Activated CD4-positive, alpha-beta T cell treated with anti-CD3 and anti-CD28 coated beads for 36 hours (primary cell): ENCODE measurements at regions of chr6 and their contacts with region 1.

Region 1: DNA sequence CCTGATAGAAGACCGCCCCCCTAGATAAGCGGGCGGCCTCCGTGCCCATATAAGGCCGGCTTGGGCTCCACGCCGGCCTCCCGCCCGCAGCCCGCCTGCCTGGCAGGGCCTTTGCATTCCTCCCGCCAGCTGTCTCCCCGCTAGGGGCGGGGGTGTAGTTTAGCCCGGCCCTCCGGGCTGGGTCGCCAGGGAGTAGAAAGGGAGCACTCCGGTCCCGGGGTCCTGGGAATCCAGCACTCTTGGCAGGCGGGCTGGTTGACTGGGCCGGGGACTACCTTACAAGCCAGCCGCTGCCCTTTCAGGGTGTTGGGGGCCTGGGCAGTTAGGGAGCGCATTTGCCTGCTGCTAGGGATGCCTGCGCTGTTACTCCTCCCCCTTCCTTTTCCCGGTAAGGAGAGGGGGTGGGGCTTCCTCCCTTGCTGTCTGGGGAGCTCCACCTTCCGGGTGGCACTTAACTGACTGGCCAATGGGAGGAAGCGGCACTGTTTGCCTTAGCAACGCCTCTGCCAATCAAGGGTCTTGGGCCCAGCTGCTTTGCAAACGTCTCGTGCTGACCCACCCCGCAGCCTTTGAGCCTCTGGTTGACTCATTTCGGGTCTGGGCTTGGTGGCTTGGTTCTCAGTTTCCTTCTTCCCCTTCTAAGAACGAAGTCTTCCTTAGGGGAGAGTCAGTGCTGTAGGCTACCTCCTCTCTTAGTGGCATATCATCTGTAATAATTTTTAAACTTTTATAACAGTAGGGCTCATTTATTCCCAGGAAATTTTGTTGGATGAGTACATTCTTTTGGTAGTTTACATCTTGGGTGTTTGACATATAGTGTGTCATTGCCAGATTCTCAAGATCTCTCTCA is 3.4 kb downstream of the SRF start:
- DNase-seq: peak; percentile 98
- ATAC-seq: peak; percentile 80
- H3K4me3 Mint-ChIP-seq: peak overlapping the region; percentile 85
- H3K27ac Mint-ChIP-seq: peak overlapping the region; percentile 79
- H3K4me1 Mint-ChIP-seq: peaks cover 38% of the 10 kb centered on the region
- H3K27me3 Mint-ChIP-seq: no peaks in the 10 kb centered on the region

Region 2: GRCh38 chr6:42771741-42772100 is 402.8 kb before region 1 on chr6:
- CTCF ChIA-PET with region 1: no interaction called
- POLR2A ChIA-PET with region 1: no interaction called
- intact Hi-C with region 1: loop called (anchors 2 to 10 kb)
- DNase-seq: no peak
- ATAC-seq: no peak
- H3K4me3 Mint-ChIP-seq: peak overlapping the region; percentile 70
- H3K27ac Mint-ChIP-seq: peak overlapping the region; percentile 99
- H3K4me1 Mint-ChIP-seq: peaks cover 58% of the 10 kb centered on the region
- H3K27me3 Mint-ChIP-seq: no peaks in the 10 kb centered on the region

Region 3: DNA sequence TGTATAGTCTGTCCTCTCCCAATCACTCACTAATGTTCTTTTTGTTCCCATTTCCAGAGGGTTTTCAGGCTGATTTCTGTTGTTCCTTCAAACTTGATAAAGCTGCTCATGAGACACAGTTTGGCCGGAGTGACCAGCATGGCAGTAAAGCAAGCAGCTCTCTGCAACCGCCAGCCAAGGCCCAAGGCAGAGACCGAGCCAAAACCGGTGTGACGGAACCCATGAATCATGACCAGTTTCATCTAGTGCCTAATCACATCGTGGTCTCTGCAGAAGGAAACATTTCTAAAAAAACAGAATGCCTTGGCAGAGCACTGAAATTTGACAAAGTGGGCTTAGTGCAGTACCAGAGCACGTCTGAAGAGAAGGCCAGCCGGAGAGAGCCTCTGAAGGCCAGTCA is 309.9 kb before region 1 on chr6:
- CTCF ChIA-PET with region 1: no interaction called
- POLR2A ChIA-PET with region 1: no interaction called
- intact Hi-C with region 1: no loop called
- DNase-seq: peak; percentile 26
- ATAC-seq: no peak
- H3K4me3 Mint-ChIP-seq: no peak overlapping the region
- H3K27ac Mint-ChIP-seq: peak overlapping the region; percentile 66
- H3K4me1 Mint-ChIP-seq: no peaks in the 10 kb centered on the region
- H3K27me3 Mint-ChIP-seq: no peaks in the 10 kb centered on the region

Region 4: DNA sequence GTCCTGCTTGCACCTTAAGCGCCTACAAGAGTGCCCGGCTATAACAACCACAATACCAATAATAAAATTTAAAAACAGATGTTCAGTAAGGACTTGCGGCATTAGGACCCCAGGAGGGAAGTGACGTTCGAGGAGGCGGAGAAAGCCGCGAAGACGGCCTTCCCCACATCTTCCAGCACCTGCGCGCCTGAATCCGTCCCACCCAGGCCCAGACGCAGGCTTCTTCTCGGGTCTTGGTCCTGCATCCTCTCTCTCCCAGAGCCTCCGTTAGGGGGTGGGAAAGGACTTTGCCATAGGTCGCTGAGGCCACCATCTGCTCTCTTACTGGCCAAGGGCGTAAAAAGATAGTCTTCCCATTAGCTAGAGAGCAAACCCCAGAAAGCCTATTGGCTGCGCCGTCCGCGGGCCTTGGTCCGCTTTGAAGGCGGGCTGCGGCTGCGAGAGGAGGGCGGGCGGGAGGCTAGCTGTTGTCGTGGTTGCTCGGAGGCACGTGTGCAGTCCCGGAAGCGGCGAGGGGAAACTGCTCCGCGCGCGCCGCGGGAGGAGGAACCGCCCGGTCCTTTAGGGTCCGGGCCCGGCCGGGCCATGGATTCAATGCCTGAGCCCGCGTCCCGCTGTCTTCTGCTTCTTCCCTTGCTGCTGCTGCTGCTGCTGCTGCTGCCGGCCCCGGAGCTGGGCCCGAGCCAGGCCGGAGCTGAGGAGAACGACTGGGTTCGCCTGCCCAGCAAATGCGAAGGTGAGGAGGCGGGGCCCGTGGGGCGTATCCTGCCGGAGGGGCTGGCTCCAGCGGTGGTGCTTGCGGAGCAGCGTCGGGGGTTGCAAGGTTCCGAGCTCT is 245.3 kb before region 1 on chr6 and contains the start of gene CNPY3:
- CTCF ChIA-PET with region 1: interaction called, 4 read pairs
- POLR2A ChIA-PET with region 1: interaction called, 7 read pairs
- intact Hi-C with region 1: loop called (anchors 1 to 5 kb)
- DNase-seq: peak; percentile 98
- ATAC-seq: peak; percentile 88
- H3K4me3 Mint-ChIP-seq: peak within 1 kb of the TSS; percentile 84
- H3K27ac Mint-ChIP-seq: peak within 1 kb of the TSS; percentile 93
- H3K4me1 Mint-ChIP-seq: peaks cover 40% of the 10 kb centered on the region
- H3K27me3 Mint-ChIP-seq: no peaks in the 10 kb centered on the region
- total RNA-seq, gene CNPY3: 33.0 to 34.3 TPM

Region 5: GRCh38 chr6:43013843-43014433 is 160.6 kb before region 1 on chr6 and contains the starts of genes KLHDC3 and MEA1:
- CTCF ChIA-PET with region 1: interaction called, 3 read pairs
- POLR2A ChIA-PET with region 1: no interaction called
- intact Hi-C with region 1: loop called (anchors 1 kb)
- DNase-seq: peak; percentile 99
- ATAC-seq: peak; percentile 96
- H3K4me3 Mint-ChIP-seq: peak within 1 kb of the TSS; percentile 91
- H3K27ac Mint-ChIP-seq: peak within 1 kb of the TSS; percentile 87
- H3K4me1 Mint-ChIP-seq: peaks cover 39% of the 10 kb centered on the region
- H3K27me3 Mint-ChIP-seq: no peaks in the 10 kb centered on the region
- total RNA-seq, gene KLHDC3: 58.3 to 65.2 TPM
- total RNA-seq, gene MEA1: 93.4 to 129 TPM

Region 6: GRCh38 chr6:43247113-43247999 is 72.9 kb after region 1 on chr6:
- CTCF ChIA-PET with region 1: no interaction called
- POLR2A ChIA-PET with region 1: no interaction called
- intact Hi-C with region 1: loop called (anchors 1 to 5 kb)
- DNase-seq: peak; percentile 94
- ATAC-seq: peak; percentile 99
- H3K4me3 Mint-ChIP-seq: peak overlapping the region; percentile 68
- H3K27ac Mint-ChIP-seq: peak overlapping the region; percentile 62
- H3K4me1 Mint-ChIP-seq: peaks cover 25% of the 10 kb centered on the region
- H3K27me3 Mint-ChIP-seq: peaks cover 14% of the 10 kb centered on the region

Region 7: DNA sequence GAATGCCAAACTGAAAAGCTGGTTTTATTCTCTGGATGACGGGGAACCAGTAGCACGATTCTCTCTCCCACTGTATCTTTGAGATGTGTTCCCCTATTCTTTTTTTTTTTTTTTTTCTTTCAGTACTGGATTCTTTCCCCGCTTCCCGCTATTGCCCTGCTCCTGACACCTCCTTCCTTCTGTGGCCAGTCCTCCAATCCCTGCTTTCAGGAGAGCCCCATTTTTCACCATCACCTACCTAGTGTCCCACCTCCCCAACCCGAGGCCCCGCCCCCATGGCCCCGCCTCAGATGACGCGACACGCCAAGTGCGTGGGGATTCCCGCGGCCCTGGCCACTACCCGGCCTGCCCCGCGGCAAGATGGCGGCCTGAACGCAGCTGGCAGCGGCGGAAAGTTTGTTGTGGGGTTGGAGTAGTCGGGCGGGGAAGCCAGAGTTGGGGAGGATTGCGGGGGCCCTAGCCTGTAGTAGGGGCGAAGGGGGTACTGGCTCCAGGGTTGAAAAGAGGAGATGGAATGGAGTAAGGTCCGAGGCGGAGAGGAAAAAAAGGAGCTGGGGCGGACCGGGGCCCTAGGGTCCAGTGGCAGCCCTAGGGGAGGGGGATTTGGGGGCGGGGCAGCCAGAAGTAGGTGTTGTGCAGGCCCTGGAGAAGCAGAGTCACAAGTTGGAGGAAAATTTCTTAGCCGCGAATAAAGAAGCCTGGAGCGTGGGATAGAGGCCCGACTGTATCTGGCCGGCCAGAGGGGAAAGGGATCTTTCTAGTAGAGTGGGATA is 302.9 kb after region 1 on chr6 and contains the start of gene TJAP1:
- CTCF ChIA-PET with region 1: interaction called, 3 read pairs
- POLR2A ChIA-PET with region 1: no interaction called
- intact Hi-C with region 1: loop called in 1 of 2 experiments (anchors 1 kb)
- DNase-seq: peak; percentile 98
- ATAC-seq: peak; percentile 99
- H3K4me3 Mint-ChIP-seq: peak within 1 kb of the TSS; percentile 98
- H3K27ac Mint-ChIP-seq: peak within 1 kb of the TSS; percentile 82
- H3K4me1 Mint-ChIP-seq: peaks cover 38% of the 10 kb centered on the region
- H3K27me3 Mint-ChIP-seq: no peaks in the 10 kb centered on the region
- total RNA-seq, gene TJAP1: 35.6 to 37.2 TPM

Region 8: DNA sequence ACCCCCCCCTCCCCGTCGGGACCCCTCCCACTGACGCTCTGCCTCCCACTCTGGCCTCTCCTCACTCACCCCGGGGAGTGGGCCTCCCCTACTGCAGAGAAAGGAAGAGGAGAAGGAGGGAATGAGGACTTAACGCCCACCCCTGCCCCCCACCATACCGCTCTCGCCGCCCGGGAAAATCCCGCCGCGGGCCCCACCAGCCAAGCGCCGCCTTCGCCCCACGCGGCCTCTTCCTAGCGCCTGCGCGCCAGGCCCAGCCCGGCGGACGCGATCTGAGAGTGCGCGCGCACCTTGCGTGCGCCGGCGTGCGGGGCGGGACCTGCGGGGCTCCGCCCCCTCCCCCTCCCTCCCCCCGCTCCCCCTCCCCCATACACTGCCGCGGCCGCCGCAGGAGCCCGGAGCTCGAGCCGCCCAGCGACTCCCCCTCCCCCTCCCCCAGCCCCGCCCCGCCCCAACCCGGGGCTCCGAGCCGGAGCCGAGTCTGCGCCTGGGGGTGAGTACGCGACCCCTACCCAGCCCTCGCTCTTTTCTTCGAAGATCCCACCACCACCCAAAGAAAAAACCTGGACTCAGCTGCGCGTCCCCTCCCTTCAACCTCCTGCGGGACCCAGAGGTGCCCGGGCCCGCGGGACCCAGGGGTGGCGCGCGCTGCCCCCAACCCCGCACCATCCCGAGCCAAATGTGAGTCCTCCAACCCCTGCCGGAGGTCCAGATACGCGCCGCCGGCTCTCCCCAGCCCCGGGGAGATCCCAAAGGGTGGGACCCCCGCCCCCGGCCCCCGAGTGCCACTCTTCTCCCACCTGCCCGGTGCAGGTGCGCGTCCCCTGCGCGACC is 952.9 kb after region 1 on chr6 and contains the starts of genes MRPL14 and TMEM63B:
- CTCF ChIA-PET with region 1: no interaction called
- POLR2A ChIA-PET with region 1: no interaction called
- intact Hi-C with region 1: loop called in 1 of 2 experiments (anchors 5 kb)
- DNase-seq: peak; percentile 95
- ATAC-seq: peak; percentile 81
- H3K4me3 Mint-ChIP-seq: peak within 1 kb of the TSS; percentile 82
- H3K27ac Mint-ChIP-seq: peak within 1 kb of the TSS; percentile 96
- H3K4me1 Mint-ChIP-seq: peaks cover 46% of the 10 kb centered on the region
- H3K27me3 Mint-ChIP-seq: no peaks in the 10 kb centered on the region
- total RNA-seq, gene MRPL14: 29.5 to 43.3 TPM
- total RNA-seq, gene TMEM63B: 10.9 to 15.2 TPM